ENCODE measurements at regions of chr1 and their contacts with region 1.

Region 1: GRCh38 chr1:247421074-247421473 is 5.1 kb downstream of the NLRP3 start:
- H3K4me3 Mint-ChIP-seq: peak overlapping the region; percentile 71
- H3K27ac Mint-ChIP-seq: peak overlapping the region; percentile 87
- H3K4me1 Mint-ChIP-seq: peaks cover 92% of the 10 kb centered on the region
- H3K27me3 Mint-ChIP-seq: no peaks in the 10 kb centered on the region

Region 2: GRCh38 chr1:247218121-247218651 is 202.9 kb before region 1 on chr1:
- intact Hi-C with region 1: no loop called
- H3K4me3 Mint-ChIP-seq: no peak overlapping the region
- H3K27ac Mint-ChIP-seq: no peak overlapping the region
- H3K4me1 Mint-ChIP-seq: peaks cover 9% of the 10 kb centered on the region
- H3K27me3 Mint-ChIP-seq: no peaks in the 10 kb centered on the region

Region 3: DNA sequence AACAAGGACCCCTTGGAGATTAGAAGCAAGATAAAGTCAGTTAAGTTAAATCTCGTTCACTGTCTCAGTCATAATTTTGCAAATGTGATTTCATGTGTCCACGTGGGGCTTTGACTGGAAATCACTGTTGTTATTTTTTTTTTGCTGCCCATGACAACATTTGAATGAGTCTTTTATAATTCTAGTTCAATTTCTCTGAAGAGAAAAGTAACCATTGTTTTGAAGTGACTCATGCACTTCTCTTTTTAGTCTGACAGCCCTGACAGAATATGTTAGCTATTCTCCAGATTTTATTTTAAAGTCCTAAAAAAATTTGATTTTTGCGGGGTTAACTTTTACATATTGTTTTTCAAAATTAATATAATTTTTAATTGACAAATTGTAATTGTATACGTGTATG is 35.8 kb before region 1 on chr1:
- intact Hi-C with region 1: no loop called
- H3K4me3 Mint-ChIP-seq: no peak overlapping the region
- H3K27ac Mint-ChIP-seq: peak overlapping the region; percentile 78
- H3K4me1 Mint-ChIP-seq: peaks cover 60% of the 10 kb centered on the region
- H3K27me3 Mint-ChIP-seq: no peaks in the 10 kb centered on the region

Region 4: DNA sequence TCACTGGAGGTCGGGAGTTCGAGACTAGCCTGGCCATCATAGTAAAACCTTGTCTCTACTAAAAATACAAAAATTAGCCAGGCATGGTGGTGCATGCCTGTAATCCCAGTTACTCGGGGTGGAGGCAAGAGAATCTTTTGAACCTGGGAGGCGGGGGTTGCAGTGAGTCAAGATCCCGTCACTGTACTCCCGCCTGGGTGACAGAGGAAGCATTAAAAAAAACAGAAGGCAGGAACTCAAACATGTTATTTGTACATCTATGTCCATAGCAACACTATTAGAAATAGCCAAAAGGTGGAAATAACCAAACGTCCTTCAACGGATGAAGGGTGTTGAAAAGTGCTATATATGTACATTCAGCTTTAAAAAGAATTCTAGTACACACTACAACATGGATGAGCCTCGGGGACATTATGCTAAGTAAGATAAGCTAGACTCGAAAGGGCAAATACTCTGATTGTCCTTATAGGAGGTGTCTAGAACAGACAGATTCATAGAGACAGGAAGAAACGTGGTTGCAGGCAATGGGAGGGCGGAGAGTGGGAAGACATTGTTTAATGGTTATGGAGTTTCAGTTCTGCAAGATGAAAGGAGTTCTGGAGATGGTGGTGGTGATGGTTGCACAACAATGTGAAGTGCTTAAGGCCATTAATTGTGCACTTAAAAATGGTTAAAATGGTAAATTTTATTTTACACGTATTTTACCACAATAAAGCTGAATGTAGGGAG is 14.1 kb after region 1 on chr1:
- intact Hi-C with region 1: loop called (anchors 2 kb)
- H3K4me3 Mint-ChIP-seq: peak overlapping the region; percentile 24
- H3K27ac Mint-ChIP-seq: peak overlapping the region; percentile 74
- H3K4me1 Mint-ChIP-seq: peaks cover 95% of the 10 kb centered on the region
- H3K27me3 Mint-ChIP-seq: no peaks in the 10 kb centered on the region